B cell (primary cell): ENCODE measurements at regions of chr10 and their contacts with region 1.

Region 1: DNA sequence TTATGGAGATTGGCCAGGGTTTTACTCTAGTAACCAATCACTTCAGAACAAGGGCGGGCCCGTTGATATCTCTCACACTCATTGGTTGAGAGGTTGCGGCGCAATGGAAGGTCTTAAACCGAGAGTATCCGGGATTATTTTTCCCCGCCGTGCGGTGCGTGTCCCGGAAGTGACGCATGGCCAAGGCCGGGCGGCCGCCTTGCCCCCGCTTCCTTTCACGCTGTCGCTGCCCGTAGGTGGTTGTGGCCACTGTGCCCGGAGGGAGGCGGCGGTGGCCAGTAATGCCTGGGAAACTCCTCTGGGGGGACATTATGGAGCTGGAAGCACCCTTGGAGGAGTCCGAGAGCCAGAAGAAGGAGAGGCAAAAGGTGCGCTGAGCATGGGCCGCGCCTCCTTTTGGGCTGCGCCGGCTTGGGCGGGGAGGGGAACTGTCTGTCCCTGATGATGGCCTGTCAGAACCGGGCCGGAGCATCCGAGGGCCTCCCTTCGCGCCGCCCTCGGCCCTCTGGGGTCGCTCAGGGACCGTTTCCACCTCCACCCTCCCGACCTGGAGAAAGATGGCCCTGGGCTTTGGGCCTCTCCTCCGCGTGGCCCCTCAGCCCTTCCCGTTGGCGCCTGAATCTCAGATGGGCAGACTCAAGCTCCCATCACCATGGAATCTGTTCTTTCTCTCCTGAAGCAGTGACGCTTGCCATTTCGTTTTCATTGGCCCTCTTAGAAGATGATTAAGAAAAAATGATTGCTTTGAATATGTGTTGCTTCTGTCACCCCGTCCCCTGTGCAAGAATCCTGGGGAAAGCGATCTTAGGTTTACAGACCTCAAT is at the start of gene DDX50:
- DNase-seq: peak; percentile 97
- ATAC-seq: peak; percentile 94
- H3K4me3 ChIP-seq: peak within 1 kb of the TSS; percentile 67 to 97 (median 91)
- H3K4me3 Mint-ChIP-seq: peak within 1 kb of the TSS; percentile 98
- H3K27ac ChIP-seq: peak within 1 kb of the TSS; percentile 97 to 100
- H3K27ac Mint-ChIP-seq: peak within 1 kb of the TSS; percentile 100
- H3K4me1 ChIP-seq: peaks cover 20 to 22% of the 10 kb centered on the region in 2 donors
- H3K4me1 Mint-ChIP-seq: peaks cover 32% of the 10 kb centered on the region
- H3K27me3 ChIP-seq: no peaks in the 10 kb centered on the region
- H3K27me3 Mint-ChIP-seq: peaks cover 3% of the 10 kb centered on the region
- CTCF ChIP-seq: no peak
- total RNA-seq, gene DDX50: 38.6 and 39.3 TPM in 2 replicates

Region 2: GRCh38 chr10:68526626-68527307 is 374.5 kb before region 1 on chr10:
- CTCF ChIA-PET with region 1: no interaction called
- POLR2A ChIA-PET with region 1: interaction called, 11 read pairs
- intact Hi-C with region 1: loop called (anchors 1 kb)
- DNase-seq: no peak
- ATAC-seq: no peak
- H3K4me3 ChIP-seq: peak overlapping the region; percentile 70 to 98 (median 92)
- H3K4me3 Mint-ChIP-seq: peak overlapping the region; percentile 87
- H3K27ac ChIP-seq: peak overlapping the region; percentile 86 to 95
- H3K27ac Mint-ChIP-seq: peak overlapping the region; percentile 91
- H3K4me1 ChIP-seq: peaks cover 6 to 13% of the 10 kb centered on the region in 2 donors
- H3K4me1 Mint-ChIP-seq: peaks cover 17% of the 10 kb centered on the region
- H3K27me3 ChIP-seq: no peaks in the 10 kb centered on the region
- H3K27me3 Mint-ChIP-seq: no peaks in the 10 kb centered on the region
- CTCF ChIP-seq: no peak

Region 3: GRCh38 chr10:68826764-68827591 is 74.3 kb before region 1 on chr10 and contains the start of gene STOX1:
- CTCF ChIA-PET with region 1: interaction called, 5 read pairs
- POLR2A ChIA-PET with region 1: no interaction called
- intact Hi-C with region 1: loop called (anchors 10 kb)
- DNase-seq: peak; percentile 74
- ATAC-seq: peak; percentile 70
- H3K4me3 ChIP-seq: peak within 1 kb of the TSS; percentile 40 to 66 (median 61)
- H3K4me3 Mint-ChIP-seq: peak within 1 kb of the TSS; percentile 83
- H3K27ac ChIP-seq: peak within 1 kb of the TSS in 1 of 2 donors; percentile 40
- H3K27ac Mint-ChIP-seq: no peak within 1 kb of the TSS
- H3K4me1 ChIP-seq: peaks cover 3 to 7% of the 10 kb centered on the region in 2 donors
- H3K4me1 Mint-ChIP-seq: peaks cover 5% of the 10 kb centered on the region
- H3K27me3 ChIP-seq: peaks cover 0 to 16% (median 0%) of the 10 kb centered on the region in 4 experiments
- H3K27me3 Mint-ChIP-seq: peaks cover 6% of the 10 kb centered on the region
- CTCF ChIP-seq: no peak
- total RNA-seq, gene STOX1: 0.53 and 0.57 TPM in 2 replicates

Region 4: DNA sequence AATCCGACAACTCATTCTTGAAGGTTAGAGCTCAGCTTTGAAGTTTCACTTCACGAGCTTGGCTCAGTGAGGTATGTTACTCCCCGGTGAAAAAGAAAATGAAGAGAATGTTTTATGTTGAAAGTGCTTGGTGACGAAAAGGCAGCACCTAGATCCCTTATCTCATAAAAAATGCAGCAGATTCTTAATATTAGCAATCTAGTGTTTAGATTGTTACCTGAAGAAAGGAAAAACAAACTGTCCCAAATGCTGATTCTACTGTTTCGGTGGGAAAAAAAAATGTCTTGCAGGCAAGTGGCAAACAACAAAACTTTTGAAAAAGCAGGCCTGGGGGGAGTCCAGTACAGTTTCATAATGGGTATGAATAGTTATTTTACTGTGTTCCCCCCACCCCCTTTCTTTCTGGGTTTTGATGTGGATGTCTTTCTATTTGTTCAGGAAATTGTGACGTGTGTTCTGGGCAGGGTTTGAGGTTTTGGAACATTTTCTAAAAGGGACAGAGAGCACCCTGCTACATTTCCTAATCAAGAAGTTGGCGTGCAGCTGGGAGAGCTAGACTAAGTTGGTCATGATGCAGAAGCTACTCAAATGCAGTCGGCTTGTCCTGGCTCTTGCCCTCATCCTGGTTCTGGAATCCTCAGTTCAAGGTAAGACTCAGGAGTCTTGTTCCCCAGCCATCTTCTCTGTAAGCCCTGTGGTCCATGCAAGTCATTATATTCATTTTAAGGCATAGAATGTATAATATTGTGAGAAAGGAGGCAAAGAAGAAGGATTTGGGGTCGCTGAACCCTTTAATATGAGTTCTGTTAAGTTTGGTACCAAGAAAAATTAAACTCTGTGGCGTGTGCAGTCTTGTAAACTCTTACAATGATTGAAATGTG is 186.5 kb after region 1 on chr10 and contains the start of gene SRGN:
- CTCF ChIA-PET with region 1: no interaction called
- POLR2A ChIA-PET with region 1: interaction called, 3 read pairs
- intact Hi-C with region 1: loop called (anchors 1 kb)
- DNase-seq: peak; percentile 78
- ATAC-seq: peak; percentile 68
- H3K4me3 ChIP-seq: peak within 1 kb of the TSS; percentile 40 to 95 (median 64)
- H3K4me3 Mint-ChIP-seq: peak within 1 kb of the TSS; percentile 87
- H3K27ac ChIP-seq: peak within 1 kb of the TSS; percentile 73 to 91
- H3K27ac Mint-ChIP-seq: peak within 1 kb of the TSS; percentile 94
- H3K4me1 ChIP-seq: peaks cover 38 to 39% of the 10 kb centered on the region in 2 donors
- H3K4me1 Mint-ChIP-seq: peaks cover 55% of the 10 kb centered on the region
- H3K27me3 ChIP-seq: no peaks in the 10 kb centered on the region
- H3K27me3 Mint-ChIP-seq: no peaks in the 10 kb centered on the region
- CTCF ChIP-seq: no peak
- total RNA-seq, gene SRGN: 47.3 and 49.9 TPM in 2 replicates

Region 5: DNA sequence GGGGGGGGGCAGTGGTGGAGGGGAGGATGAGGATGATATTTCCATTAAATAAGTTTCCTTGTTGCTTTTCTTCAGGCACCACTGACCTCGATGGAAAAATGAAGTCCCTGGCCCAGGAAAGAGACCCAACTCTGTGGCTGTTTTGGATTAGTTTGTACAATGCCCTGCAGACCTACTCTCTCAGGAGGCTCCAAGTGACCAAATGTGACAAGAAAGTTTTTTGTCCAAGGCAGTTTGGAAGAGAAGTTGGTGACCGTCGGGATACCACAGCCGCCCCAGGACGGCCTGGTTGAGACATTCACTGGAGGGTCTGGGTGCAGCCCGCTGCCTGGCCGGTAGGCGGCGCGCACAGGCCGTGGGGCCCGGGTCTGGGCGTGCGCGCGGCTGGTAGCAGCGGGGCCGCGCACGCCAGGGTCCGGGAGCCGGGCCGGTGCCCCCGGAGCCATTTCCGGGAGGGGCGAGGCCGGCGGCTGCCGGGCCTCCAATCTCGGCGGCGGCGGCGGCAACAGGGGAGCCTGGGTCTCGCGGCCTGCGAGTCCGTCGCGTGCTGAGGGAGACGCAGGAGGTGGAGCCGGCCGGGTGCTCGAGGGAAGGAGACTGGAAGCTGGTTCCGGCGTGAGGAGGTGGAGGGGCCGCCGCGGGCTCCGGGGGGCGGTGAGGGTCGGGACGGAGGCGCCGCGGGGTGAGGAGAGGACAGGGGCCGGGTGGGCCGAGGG is 1914.3 kb after region 1 on chr10 and contains the start of gene SGPL1:
- CTCF ChIA-PET with region 1: no interaction called
- POLR2A ChIA-PET with region 1: no interaction called
- intact Hi-C with region 1: loop called (anchors 10 kb)
- DNase-seq: peak; percentile 89
- ATAC-seq: peak; percentile 94
- H3K4me3 ChIP-seq: peak within 1 kb of the TSS; percentile 61 to 79 (median 68)
- H3K4me3 Mint-ChIP-seq: peak within 1 kb of the TSS; percentile 99
- H3K27ac ChIP-seq: peak within 1 kb of the TSS; percentile 53 to 79
- H3K27ac Mint-ChIP-seq: peak within 1 kb of the TSS; percentile 97
- H3K4me1 ChIP-seq: peaks cover 7 to 17% of the 10 kb centered on the region in 2 donors
- H3K4me1 Mint-ChIP-seq: peaks cover 25% of the 10 kb centered on the region
- H3K27me3 ChIP-seq: no peaks in the 10 kb centered on the region
- H3K27me3 Mint-ChIP-seq: no peaks in the 10 kb centered on the region
- CTCF ChIP-seq: peak; percentile 97
- total RNA-seq, gene SGPL1: 41.9 and 46.2 TPM in 2 replicates